ENCODE measurements at regions of chr4 and their contacts with region 1.

Region 1: DNA sequence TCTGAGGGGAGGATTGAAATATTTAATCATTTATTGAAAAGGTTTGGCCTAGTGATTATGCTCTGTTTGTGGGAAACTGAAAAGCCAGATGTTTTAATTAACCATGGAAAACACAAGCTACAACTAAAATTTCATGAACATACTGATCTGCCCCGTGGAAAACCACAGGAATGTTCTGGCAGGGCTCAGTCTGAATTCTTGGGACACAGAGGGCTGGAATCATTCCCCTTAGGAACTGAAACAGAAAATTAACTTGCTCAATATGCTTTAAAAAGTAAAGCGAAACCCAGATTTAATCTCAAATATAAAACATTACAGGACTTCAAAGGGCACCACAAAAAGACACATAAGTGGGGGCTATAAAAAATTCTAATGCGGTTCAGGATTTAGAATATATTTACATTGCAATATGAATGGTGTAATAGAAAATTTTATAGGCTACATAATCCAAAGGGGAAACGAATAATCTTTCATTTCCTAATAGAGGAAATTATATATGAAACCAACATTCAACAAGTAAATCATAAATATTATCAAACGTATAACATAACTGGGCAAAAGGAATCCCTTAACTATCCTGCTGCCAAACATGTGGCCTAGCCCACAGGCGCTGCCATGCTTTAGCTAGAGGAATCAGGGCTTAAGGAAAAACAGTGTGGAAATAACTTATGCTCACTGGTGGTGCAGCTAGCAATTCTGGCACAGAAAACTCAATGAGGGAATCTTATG is 70.9 kb downstream of the APBB2 start:
- DNase-seq: peak; percentile 62
- H3K4me3 ChIP-seq: no peak overlapping the region
- H3K27ac ChIP-seq: peak overlapping the region; percentile 87
- H3K4me1 ChIP-seq: peaks cover 59% of the 10 kb centered on the region
- H3K27me3 ChIP-seq: no peaks in the 10 kb centered on the region
- CTCF ChIP-seq: no peak
- POLR2A ChIP-seq: no peak

Region 2: GRCh38 chr4:40992472-40993295 is 150.8 kb before region 1 on chr4:
- CTCF ChIA-PET with region 1: interaction called, 5 read pairs
- POLR2A ChIA-PET with region 1: no interaction called
- dilution Hi-C with region 1: no loop called
- intact Hi-C with region 1: loop called (anchors 1 kb)
- DNase-seq: peak; percentile 82
- H3K4me3 ChIP-seq: no peak overlapping the region
- H3K27ac ChIP-seq: peak overlapping the region; percentile 84
- H3K4me1 ChIP-seq: peaks cover 62% of the 10 kb centered on the region
- H3K27me3 ChIP-seq: no peaks in the 10 kb centered on the region
- CTCF ChIP-seq: no peak
- POLR2A ChIP-seq: no peak

Region 3: DNA sequence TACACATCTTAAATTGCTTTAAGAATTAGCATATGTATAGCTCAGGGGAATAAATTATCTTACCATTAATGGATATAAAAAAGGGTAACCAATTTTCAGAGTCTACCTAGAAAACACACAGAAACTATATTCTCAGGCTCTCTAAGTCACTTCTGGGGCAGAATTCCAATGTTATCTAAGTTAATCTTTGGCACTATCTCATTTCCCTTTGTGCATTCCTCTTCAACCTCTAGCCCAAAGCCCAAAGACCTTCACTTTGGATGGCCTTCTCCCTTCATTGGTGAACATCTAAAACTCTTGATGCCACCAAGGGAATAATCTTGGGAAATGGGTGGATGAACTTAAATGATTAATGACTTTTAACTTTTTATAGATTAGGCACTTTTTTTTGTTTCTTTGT is 37.4 kb before region 1 on chr4:
- CTCF ChIA-PET with region 1: no interaction called
- POLR2A ChIA-PET with region 1: no interaction called
- dilution Hi-C with region 1: no loop called
- intact Hi-C with region 1: loop called (anchors 5 kb)
- DNase-seq: peak; percentile 54
- H3K4me3 ChIP-seq: no peak overlapping the region
- H3K27ac ChIP-seq: no peak overlapping the region
- H3K4me1 ChIP-seq: peaks cover 8% of the 10 kb centered on the region
- H3K27me3 ChIP-seq: no peaks in the 10 kb centered on the region
- CTCF ChIP-seq: no peak
- POLR2A ChIP-seq: no peak

Measured in endothelial cell of umbilical vein (primary cell).